ENCODE measurements at regions of chr6 and their contacts with region 1.

Region 1: DNA sequence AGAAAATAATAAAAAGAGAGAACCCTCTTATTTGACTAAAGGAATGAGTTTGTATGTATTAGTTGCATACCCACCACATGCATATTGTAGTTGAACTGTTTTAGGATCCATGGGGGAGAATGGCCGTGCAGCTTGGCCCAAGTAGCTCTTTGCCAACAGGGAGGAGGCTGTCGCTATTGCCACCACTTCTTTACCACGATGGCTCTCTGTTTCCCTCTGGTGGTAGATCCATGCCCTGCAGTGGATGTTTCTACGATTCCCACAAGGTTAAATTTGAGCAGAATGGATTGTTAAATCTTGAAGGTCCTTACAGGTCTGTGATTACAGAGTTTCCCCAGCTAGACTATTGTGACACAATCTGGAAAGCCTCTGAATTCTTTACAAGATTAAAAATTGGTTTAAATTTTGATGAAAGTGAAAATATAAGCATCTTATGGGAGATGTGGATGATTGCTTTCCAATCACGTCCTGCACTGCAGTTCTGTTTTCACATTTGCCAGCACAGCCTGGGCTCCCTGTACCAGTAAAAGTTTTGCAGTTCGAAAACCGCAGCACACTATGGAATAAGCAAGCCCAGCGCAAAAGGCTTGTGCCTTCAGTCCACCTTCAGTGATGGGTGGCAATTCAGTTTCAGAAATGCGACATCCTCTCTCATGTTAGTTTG is 34.4 kb upstream of the FNDC1 start:
- DNase-seq: peak; percentile 87

Region 2: DNA sequence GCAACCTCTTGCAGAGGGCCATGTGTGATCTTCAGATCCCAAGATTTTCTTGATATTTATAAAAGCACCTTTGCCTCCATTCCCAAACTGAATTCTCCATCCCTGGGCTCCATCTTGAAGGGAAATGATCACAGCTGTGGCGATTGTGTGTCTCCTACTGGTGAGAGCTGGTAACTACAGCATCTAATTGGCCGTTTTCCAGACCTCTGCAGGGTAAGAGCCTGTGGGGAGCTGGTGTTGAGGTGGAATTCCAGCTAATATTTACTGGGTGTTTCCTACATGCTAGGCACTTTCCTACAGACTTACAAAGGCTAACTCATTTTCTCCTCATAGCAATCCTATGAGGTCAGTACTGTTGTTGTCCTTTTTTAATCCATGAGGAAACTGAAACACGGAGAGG is 24.8 kb before region 1 on chr6:
- CTCF ChIA-PET with region 1: interaction called, 13 read pairs
- POLR2A ChIA-PET with region 1: no interaction called
- DNase-seq: peak; percentile 74

Region 3: DNA sequence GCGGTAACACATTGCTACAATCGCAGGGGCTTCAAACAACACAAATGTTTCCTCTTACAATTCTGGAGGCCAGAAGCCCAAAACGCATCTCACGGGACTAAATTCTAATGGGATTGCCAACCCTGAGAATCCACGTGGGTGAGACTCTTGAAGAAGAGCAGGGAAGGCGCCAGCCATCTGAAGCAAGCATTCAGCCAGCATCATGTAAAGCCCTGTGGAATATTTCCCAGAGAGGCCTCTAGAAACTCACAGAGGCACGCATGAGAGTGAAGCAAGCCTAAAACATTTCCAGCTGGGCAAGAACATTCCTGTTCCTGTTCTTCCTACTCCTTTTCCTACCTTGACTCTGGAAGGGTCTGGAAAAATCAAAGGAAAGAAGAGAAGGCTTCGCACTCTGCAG is 14.8 kb after region 1 on chr6:
- CTCF ChIA-PET with region 1: interaction called, 17 read pairs
- POLR2A ChIA-PET with region 1: no interaction called
- DNase-seq: no peak

Region 4: DNA sequence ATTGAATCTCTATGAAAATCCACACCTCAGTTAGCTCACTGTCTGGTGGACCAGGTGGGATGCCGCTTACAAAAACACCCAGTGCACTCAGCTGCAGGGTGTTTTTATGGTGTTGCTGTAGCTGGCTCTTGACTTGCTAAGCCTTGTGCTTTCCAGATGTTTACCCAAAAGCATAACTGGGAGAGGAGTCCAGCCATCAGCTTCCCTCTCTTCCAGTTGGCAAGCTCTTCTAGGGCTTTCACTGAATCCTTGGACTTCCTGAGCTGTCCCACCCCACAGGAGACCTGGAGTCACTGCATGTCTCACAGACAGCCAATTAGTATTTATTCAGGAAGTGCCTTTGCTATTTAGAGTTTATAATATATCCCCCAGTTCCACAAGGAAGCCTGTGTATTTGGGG is 245.3 kb after region 1 on chr6:
- CTCF ChIA-PET with region 1: no interaction called
- POLR2A ChIA-PET with region 1: no interaction called
- DNase-seq: no peak

Measured in HEK293T (cell line).